ENCODE measurements at regions of chr7 and their contacts with region 1.

Region 1: DNA sequence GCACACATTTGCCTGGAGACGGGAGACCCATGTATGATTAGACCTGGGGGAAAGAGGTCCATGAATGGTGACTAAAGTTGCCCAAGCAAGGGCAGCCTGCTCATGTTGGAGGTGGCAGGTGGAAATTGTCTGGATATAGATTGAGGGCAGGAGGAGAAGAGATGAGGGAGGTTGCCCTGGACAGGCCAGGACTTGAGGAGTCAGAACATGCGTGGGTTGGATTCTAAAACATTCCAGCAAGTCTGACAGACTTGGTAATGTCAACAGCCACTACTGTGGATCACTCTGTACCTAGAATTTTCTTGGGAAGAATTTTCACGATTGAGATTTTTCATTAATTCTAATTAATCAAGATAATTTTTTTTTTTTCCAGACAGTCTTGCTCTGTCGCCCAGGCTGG is 19.1 kb upstream of the SVOPL start:
- DNase-seq: no peak
- H3K4me3 Mint-ChIP-seq: no peak overlapping the region
- H3K27ac Mint-ChIP-seq: no peak overlapping the region
- H3K4me1 Mint-ChIP-seq: no peaks in the 10 kb centered on the region
- H3K27me3 Mint-ChIP-seq: no peaks in the 10 kb centered on the region
- CTCF ChIP-seq: no peak

Region 2: GRCh38 chr7:138873220-138873892 is 153.1 kb after region 1 on chr7:
- CTCF ChIA-PET with region 1: interaction called, 10 read pairs
- intact Hi-C with region 1: no loop called
- DNase-seq: no peak
- H3K4me3 Mint-ChIP-seq: no peak overlapping the region
- H3K27ac Mint-ChIP-seq: no peak overlapping the region
- H3K4me1 Mint-ChIP-seq: peaks cover 18% of the 10 kb centered on the region
- H3K27me3 Mint-ChIP-seq: no peaks in the 10 kb centered on the region
- CTCF ChIP-seq: no peak

Region 3: GRCh38 chr7:138885383-138886147 is 165.3 kb after region 1 on chr7:
- CTCF ChIA-PET with region 1: no interaction called
- intact Hi-C with region 1: no loop called
- DNase-seq: no peak
- H3K4me3 Mint-ChIP-seq: no peak overlapping the region
- H3K27ac Mint-ChIP-seq: no peak overlapping the region
- H3K4me1 Mint-ChIP-seq: peaks cover 42% of the 10 kb centered on the region
- H3K27me3 Mint-ChIP-seq: no peaks in the 10 kb centered on the region
- CTCF ChIP-seq: no peak

Measured in Calu3 (cell line).